Cardiac septum (tissue), 1 donor: ENCODE measurements at regions of chr14 and their contacts with region 1.

Region 1: GRCh38 chr14:64879635-64880220 is at the start of gene SPTB:
- DNase-seq: peak; percentile 83
- total RNA-seq, gene SPTB: 113 TPM

Region 2: GRCh38 chr14:64823305-64823861 is 56.3 kb before region 1 on chr14:
- intact Hi-C with region 1: loop called (anchors 2 kb)
- DNase-seq: peak; percentile 89

Region 3: GRCh38 chr14:64841772-64842750 is 37.7 kb before region 1 on chr14:
- intact Hi-C with region 1: loop called (anchors 2 kb)
- DNase-seq: no peak